Cardiac septum (tissue), 1 donor: ENCODE measurements at regions of chr12 and their contacts with region 1.

Region 1: DNA sequence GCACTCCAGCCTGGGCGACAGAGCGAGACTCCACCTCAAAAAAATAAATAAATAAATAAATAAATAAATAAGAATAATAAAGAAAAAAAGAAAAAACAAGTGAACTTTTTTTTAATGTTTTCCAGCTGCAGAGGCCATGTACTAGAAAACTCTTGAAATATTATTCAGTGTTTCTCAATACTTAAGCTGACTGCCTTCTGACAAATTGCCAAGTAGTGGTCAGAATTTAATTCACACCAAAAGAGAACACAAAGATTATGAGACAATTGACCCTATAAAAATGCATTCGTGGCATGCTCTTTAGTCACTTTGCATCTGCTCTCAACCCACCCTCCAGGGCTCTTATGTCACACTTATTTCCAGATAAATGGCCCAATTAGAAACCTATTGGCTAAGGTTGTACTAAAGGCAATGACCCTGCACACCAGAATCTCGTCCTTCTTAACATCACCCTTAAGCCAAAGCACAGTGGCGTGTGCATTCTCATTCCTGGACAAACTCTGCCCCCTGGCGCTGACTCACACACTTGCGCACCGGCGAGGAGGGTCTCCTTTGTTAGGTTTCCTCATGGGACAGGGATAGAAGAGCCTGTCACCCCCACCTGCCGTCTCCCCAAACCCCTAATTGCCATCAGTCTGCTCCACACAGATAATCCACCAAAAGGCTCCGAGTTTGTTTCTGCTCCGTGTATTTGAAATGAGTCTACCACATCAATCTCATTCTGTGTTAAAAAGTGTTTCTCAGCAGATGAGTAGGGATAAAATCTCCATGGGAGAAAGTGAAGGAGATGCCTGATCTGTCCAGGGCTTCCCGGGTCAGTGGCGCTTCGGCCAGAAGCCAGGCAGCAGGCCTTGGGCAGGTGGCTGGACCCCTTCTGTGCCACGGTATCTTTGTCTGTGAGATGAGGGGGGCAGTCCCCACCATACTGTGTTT is 73.1 kb upstream of the CEP83 start:
- DNase-seq: peak; percentile 77

Region 2: DNA sequence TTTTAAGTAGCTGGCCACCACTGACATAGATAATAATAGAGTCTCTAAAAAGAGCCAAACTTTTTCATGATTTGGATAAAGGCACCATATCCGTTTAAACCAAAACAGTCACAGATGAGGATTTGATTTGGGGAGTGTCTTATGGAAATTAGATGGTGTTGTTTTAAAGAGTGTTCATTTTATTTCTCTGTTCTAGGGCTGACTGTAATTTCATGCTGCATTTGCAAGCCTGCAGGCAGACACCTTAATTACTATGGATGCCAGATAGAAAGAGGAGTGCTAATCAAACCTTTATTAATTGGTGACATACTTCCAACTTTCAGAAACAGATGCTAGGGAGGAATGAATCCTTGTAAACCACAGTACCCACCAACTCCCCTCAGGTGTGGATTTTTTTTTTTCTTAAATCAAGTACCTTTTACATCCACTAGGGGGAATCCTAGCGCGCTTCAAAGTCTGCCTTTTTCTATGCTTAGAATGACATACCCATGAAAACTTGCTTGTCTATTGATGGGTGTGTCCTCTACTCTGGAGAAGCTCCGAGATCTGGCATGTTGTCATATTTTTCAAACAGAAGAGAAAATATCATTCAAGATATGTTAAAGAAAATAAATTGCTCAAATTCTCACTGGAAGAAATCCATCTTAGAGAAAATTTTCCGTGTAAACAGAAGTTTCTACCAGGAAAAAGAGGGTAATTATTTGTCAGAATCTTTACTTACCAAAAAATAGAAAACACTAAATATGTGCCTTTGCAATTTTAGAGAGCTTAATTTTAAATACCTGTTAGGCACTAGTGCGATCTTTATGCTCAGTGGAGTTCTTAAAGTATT is 398.6 kb before region 1 on chr12:
- intact Hi-C with region 1: loop called (anchors 1 kb)
- DNase-seq: no peak